ENCODE measurements at regions of chr7 and their contacts with region 1.

Region 1: DNA sequence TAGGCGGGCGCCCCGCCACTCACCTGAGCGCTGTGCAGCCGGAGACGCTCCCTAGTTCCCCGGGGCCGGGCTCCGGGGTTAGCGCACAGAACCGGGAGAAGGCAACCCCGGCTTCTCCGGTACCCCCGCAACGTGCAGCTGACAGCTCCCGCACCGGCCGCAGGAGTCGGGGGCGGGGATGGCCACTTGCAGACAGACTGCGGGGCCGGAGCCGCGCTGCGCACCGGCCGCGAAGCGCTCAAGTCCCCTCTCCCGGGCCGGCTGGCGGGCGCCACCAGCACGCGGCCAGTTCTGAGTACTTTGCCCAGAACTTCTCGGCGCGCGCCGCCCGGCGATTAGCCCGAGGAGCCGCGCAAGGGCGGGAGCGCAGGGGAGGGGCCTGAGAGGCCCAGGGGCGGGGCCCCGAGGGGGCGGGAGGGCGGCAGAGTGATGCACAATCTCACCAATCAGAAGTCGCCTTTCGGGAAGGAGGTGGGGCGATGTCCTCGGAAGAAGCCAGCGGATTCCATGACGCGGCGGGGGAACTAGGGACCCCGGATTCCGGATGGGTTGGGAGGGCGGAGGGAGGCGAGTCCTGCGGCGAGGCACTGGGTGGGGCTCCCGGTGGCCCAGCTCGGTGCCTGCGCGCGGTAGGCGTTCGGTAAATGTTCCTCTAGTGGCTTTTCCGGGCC is at the start of gene OSBPL3:
- DNase-seq: peak; percentile 98
- H3K27ac ChIP-seq: peak within 1 kb of the TSS; percentile 96
- CTCF ChIP-seq: no peak

Region 2: GRCh38 chr7:24819916-24820689 is 159.9 kb before region 1 on chr7:
- CTCF ChIA-PET with region 1: interaction called, 17 read pairs
- POLR2A ChIA-PET with region 1: interaction called, 5 read pairs
- DNase-seq: peak; percentile 80
- H3K27ac ChIP-seq: peak overlapping the region; percentile 83
- CTCF ChIP-seq: peak; percentile 95

Region 3: GRCh38 chr7:24894429-24895221 is 85.4 kb before region 1 on chr7:
- CTCF ChIA-PET with region 1: no interaction called
- POLR2A ChIA-PET with region 1: no interaction called
- DNase-seq: no peak
- H3K27ac ChIP-seq: no peak overlapping the region
- CTCF ChIP-seq: no peak

Region 4: DNA sequence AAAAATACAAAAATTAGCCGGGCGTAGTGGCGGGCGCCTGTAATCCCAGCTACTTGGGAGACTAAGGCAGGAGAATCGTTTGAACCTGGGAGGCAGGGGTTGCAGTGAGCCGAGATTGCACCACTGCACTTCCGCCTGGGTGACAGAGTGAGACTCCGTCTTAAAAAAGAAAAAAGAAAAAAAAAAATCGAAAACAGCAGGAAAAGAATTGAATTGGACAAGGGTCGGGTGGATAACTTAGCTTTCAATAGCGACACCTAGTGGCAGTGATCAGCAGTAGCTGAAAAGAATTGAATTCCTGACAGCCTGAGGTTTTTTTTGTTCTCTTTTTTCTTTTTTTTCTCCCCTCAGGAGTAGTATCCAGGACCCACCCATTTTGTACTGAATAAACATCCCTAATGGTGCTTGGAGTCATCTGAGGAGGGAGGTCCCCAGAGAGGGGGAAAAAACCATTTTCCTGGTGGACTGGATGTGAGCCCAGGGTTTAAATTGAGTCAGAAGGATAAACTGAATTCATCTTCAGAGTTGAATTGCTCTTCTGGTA is 90.0 kb after region 1 on chr7:
- CTCF ChIA-PET with region 1: interaction called, 26 read pairs
- POLR2A ChIA-PET with region 1: interaction called, 8 read pairs
- DNase-seq: peak; percentile 84
- H3K27ac ChIP-seq: peak overlapping the region; percentile 51
- CTCF ChIP-seq: peak; percentile 93

Region 5: DNA sequence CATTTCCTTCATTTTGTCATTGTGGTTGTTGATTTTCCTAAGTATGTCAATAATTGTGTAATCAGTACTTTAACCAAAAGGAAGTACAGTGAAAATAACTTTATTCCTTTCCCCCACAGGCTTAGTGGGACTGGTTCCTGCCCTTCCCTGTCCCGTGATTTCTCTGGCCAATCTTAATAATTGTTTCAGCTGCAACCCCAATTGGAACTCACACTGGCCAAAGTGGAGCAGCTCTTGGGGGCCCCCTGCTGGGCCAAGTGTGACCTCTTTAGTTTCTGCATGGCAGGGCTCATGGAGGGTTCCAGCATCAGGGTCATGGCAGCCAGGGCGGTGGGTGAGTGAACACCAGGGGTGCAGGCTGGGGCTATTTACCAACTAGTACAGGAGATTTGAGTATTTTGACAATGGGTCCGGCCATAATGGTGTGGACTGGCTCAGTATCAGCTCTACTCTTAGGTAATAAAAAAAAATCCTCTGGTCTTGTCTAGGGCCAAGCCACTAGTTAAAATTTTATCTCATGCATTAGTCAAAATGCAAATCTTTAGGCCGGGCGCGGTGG is 113.3 kb after region 1 on chr7:
- CTCF ChIA-PET with region 1: interaction called, 40 read pairs
- POLR2A ChIA-PET with region 1: no interaction called
- DNase-seq: peak; percentile 77
- H3K27ac ChIP-seq: peak overlapping the region; percentile 42
- CTCF ChIP-seq: peak; percentile 89

Region 6: DNA sequence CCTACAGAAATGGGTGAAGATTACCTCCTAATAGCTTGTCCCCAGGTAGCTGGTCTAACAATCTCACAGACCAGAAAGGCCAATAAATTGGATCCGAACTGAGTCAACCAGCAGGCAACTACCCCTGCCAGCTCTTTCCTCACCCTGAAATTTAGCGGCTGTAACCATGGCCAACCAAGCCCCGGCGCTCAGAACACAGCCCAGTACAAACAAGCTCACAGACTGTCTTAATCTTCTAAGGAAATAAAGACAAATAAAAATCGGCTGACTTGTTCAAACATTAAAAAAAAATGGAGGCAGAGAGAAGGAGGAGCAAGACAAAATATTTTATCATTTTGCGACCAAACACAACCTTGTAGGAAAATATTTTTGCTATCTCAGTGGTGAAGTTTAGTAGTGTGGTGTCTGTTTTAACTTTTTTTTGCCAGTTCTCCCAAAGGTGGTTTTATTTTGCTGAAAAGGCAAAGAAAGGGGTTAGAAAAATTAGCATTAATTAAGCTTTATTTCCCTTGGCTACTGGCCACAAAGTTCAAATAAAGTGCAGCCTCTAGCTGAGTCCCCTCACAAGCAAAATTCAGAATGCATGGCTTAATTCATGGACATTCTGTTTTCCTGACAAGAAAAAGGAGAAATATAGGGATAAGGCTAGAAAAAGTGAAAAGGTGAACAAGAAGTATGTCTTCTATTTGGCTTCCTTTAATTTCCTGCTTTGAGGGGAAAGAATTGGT is 561.3 kb after region 1 on chr7:
- CTCF ChIA-PET with region 1: no interaction called
- POLR2A ChIA-PET with region 1: no interaction called
- DNase-seq: no peak
- H3K27ac ChIP-seq: no peak overlapping the region
- CTCF ChIP-seq: no peak

Region 7: GRCh38 chr7:25586513-25586912 is 606.5 kb after region 1 on chr7:
- CTCF ChIA-PET with region 1: no interaction called
- POLR2A ChIA-PET with region 1: no interaction called
- DNase-seq: no peak
- H3K27ac ChIP-seq: no peak overlapping the region
- CTCF ChIP-seq: no peak